Naive thymus-derived CD4-positive, alpha-beta T cell (primary cell): ENCODE measurements at regions of chr6 and their contacts with region 1.

Region 1: DNA sequence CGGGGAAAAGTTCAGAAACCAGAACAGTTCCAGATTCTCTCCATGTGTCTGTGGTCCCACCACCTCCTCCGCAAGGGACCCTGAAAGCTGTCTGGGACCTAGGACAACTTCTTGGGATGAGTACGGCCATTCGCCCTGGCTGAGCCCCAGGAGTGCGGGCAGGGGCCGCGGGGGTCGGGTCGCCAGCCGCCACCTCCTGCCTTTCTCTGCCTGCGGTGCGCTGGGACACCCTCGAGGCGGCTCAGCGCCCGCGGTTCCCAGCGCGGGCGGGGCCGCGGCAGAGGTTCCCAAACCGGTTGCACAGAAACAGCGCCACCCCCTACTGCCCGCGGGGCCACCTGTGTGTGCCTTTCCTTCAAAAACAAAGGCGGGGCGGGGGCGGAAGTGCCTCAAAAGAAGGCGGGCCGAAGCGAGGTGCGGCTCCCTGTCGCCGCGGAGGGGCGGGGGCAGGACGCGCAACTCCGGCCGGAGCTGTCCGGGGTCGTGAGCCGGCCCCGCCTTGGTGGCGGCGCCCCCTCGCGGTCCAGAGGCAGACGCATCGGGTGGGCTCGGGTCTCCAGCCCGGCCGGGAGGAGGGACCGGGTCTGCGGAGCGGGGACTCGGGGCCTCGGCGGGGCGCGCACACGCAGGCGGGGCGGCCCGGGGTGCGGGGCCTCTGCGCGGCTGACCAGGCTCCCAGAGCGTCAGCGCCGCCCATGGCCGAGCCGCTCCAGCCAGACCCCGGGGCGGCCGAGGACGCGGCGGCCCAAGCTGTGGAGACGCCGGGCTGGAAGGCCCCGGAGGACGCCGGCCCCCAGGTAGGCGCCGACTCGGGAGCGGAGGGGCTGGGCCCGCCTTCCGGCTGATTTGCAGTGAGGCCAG is at the start of gene HEBP2:
- DNase-seq: peak; percentile 77 to 95 (median 90)
- ATAC-seq: peak; percentile 94
- H3K4me3 ChIP-seq: peak within 1 kb of the TSS; percentile 98
- H3K4me3 Mint-ChIP-seq: peak within 1 kb of the TSS; percentile 78 to 93 (median 86)
- H3K27ac ChIP-seq: peak within 1 kb of the TSS; percentile 76
- H3K27ac Mint-ChIP-seq: peak within 1 kb of the TSS; percentile 70 to 95 (median 89)
- H3K4me1 ChIP-seq: peaks cover 12 to 14% of the 10 kb centered on the region in 2 donors
- H3K4me1 Mint-ChIP-seq: peaks cover 6 to 43% (median 32%) of the 10 kb centered on the region in 7 donors
- H3K27me3 ChIP-seq: no peaks in the 10 kb centered on the region
- H3K27me3 Mint-ChIP-seq: peaks cover 0 to 22% (median 0%) of the 10 kb centered on the region in 5 donors
- total RNA-seq, gene HEBP2: 24.9 to 50.7 (median 48.2) TPM

Region 2: GRCh38 chr6:136822376-136823127 is 1581.5 kb before region 1 on chr6 and contains the start of gene PEX7:
- CTCF ChIA-PET with region 1: no interaction called
- POLR2A ChIA-PET with region 1: no interaction called
- intact Hi-C with region 1: loop called in 1 of 2 experiments (anchors 5 kb)
- DNase-seq: peak; percentile 83 to 94 (median 92)
- ATAC-seq: peak; percentile 95
- H3K4me3 ChIP-seq: peak within 1 kb of the TSS; percentile 96
- H3K4me3 Mint-ChIP-seq: peak within 1 kb of the TSS; percentile 87 to 99 (median 94)
- H3K27ac ChIP-seq: peak within 1 kb of the TSS; percentile 91
- H3K27ac Mint-ChIP-seq: peak within 1 kb of the TSS; percentile 91 to 99 (median 96)
- H3K4me1 ChIP-seq: peaks cover 6 to 13% of the 10 kb centered on the region in 2 donors
- H3K4me1 Mint-ChIP-seq: peaks cover 13 to 50% (median 40%) of the 10 kb centered on the region in 7 donors
- H3K27me3 ChIP-seq: peaks cover 0 to 3% of the 10 kb centered on the region in 2 donors
- H3K27me3 Mint-ChIP-seq: peaks cover 3 to 10% (median 8%) of the 10 kb centered on the region in 5 donors
- total RNA-seq, gene PEX7: 4.0 to 6.2 (median 5.4) TPM

Region 3: GRCh38 chr6:137811121-137811915 is 592.7 kb before region 1 on chr6:
- CTCF ChIA-PET with region 1: no interaction called
- POLR2A ChIA-PET with region 1: no interaction called
- intact Hi-C with region 1: loop called in 1 of 2 experiments (anchors 10 kb)
- DNase-seq: peak; percentile 42 to 85 (median 53)
- ATAC-seq: peak; percentile 94
- H3K4me3 ChIP-seq: peak overlapping the region; percentile 14
- H3K4me3 Mint-ChIP-seq: peak overlapping the region; percentile 71 to 84 (median 78)
- H3K27ac ChIP-seq: peak overlapping the region; percentile 60
- H3K27ac Mint-ChIP-seq: peak overlapping the region; percentile 89 to 96 (median 93)
- H3K4me1 ChIP-seq: peaks cover 17 to 23% of the 10 kb centered on the region in 2 donors
- H3K4me1 Mint-ChIP-seq: peaks cover 22 to 56% (median 46%) of the 10 kb centered on the region in 7 donors
- H3K27me3 ChIP-seq: no peaks in the 10 kb centered on the region
- H3K27me3 Mint-ChIP-seq: no peaks in the 10 kb centered on the region

Region 4: DNA sequence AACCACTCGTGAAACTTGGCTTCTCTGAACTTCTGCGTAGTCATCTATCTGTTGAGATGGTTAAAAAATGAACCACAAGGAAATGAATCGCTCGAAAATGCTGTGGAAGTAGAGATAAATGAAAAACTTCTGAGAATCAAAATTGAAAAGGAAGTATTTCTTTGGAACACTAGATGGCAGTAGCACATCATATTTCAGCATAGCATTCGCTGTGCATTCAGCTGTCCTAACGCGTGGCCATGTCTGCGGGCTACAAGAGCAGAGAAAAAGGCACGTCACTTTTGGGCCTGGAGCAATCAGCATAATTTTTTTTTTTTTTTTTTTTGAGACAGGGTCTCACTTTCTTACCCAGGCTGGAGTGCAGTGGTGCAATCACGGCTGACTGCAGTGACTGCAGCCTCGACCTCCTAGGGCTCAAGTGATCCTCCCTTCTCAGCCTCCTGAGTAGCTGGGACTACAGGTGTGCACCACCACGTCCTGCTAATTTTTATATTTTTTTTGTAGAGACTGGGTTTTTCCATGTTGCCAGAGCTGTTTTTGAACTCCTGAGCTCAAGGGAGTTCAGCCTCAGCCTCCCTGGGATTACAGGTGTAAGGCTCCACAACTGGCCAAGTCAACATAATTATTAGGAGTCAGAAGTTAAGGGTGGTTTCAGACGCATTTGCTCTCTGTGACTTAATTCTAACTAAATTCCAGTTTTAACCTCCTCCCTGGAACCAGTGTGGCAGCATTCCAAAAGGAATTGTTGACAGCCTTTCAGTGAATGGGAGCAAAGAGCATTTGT is 288.0 kb before region 1 on chr6:
- CTCF ChIA-PET with region 1: interaction called, 7 read pairs
- POLR2A ChIA-PET with region 1: no interaction called
- intact Hi-C with region 1: loop called in 1 of 2 experiments (anchors 1 kb)
- DNase-seq: peak in 7 of 9 donors; percentile 39 to 68 (median 57)
- ATAC-seq: peak; percentile 94
- H3K4me3 ChIP-seq: no peak overlapping the region
- H3K4me3 Mint-ChIP-seq: no peak overlapping the region
- H3K27ac ChIP-seq: no peak overlapping the region
- H3K27ac Mint-ChIP-seq: no peak overlapping the region
- H3K4me1 ChIP-seq: peaks cover 0 to 4% of the 10 kb centered on the region in 2 donors
- H3K4me1 Mint-ChIP-seq: peaks cover 5 to 10% (median 7%) of the 10 kb centered on the region in 7 donors
- H3K27me3 ChIP-seq: no peaks in the 10 kb centered on the region
- H3K27me3 Mint-ChIP-seq: peaks cover 21 to 49% (median 30%) of the 10 kb centered on the region in 5 donors

Region 5: DNA sequence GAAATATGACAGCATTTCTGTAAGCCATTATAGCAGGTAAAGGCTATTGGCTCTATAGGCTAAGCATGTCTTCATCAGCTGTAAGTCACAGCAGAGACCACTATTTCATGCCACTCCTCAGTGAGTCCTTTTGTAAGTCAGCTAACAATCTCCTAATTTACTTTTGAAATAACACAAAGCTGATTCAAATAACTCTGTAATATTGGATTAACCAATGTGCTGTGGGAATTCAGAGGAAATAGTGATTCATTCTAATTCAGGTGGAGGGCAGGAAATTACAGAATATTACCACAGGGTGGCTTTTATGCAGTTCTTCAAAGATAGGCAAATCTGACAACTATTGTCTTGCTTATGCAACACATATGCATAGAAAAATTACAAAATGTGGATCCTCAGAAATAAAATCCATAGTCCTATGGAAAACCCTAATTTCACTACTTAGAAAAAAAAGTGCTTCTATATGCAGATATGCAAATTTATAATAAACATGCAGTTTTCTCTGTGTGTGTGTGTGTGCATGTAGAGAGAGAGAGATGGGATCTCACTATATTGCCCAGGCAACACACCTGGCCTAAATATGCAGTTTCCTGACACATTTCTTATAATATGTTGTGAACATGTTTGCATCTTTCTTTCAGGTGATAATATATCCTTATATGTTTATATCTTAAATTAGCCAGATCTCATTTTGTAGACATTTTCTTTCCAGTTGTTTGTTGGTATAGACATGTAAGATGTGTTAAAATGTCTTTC is 31.1 kb before region 1 on chr6:
- CTCF ChIA-PET with region 1: interaction called, 3 read pairs
- POLR2A ChIA-PET with region 1: interaction called, 4 read pairs
- intact Hi-C with region 1: loop called in 1 of 2 experiments (anchors 1 kb)
- DNase-seq: peak in 5 of 9 donors; percentile 7 to 26 (median 18)
- ATAC-seq: peak; percentile 55
- H3K4me3 ChIP-seq: no peak overlapping the region
- H3K4me3 Mint-ChIP-seq: no peak overlapping the region
- H3K27ac ChIP-seq: no peak overlapping the region
- H3K27ac Mint-ChIP-seq: no peak overlapping the region
- H3K4me1 ChIP-seq: no peaks in the 10 kb centered on the region
- H3K4me1 Mint-ChIP-seq: no peaks in the 10 kb centered on the region
- H3K27me3 ChIP-seq: no peaks in the 10 kb centered on the region
- H3K27me3 Mint-ChIP-seq: peaks cover 0 to 29% (median 5%) of the 10 kb centered on the region in 5 donors

Region 6: DNA sequence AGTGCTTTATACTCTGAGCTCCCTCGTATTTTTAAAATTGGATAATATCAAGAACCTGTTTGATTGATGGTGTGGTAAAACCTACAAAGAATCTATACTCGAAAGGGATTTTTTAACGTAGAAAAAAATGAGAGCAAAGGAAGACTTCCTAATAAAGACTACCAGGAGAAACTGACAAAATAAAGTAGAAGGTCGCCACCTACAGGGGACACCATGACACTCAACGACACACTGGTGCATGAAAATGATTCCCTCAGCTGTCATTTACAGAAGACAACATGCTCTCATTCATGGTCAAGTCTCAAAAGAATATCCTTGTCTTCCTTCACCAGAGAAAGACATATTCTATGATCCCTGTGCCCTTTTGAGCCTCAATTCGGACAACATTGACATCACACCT is 105.3 kb after region 1 on chr6:
- CTCF ChIA-PET with region 1: interaction called, 3 read pairs
- POLR2A ChIA-PET with region 1: interaction called, 3 read pairs
- intact Hi-C with region 1: loop called in 1 of 2 experiments (anchors 1 kb)
- DNase-seq: peak in 8 of 9 donors; percentile 5 to 52 (median 31)
- ATAC-seq: peak; percentile 52
- H3K4me3 ChIP-seq: no peak overlapping the region
- H3K4me3 Mint-ChIP-seq: no peak overlapping the region
- H3K27ac ChIP-seq: no peak overlapping the region
- H3K27ac Mint-ChIP-seq: peak overlapping the region in 1 of 9 donors; percentile 6
- H3K4me1 ChIP-seq: peaks cover 0 to under 1% of the 10 kb centered on the region in 2 donors
- H3K4me1 Mint-ChIP-seq: peaks cover 0 to 5% (median 0%) of the 10 kb centered on the region in 7 donors
- H3K27me3 ChIP-seq: no peaks in the 10 kb centered on the region
- H3K27me3 Mint-ChIP-seq: peaks cover 0 to 23% (median 4%) of the 10 kb centered on the region in 5 donors

Region 7: DNA sequence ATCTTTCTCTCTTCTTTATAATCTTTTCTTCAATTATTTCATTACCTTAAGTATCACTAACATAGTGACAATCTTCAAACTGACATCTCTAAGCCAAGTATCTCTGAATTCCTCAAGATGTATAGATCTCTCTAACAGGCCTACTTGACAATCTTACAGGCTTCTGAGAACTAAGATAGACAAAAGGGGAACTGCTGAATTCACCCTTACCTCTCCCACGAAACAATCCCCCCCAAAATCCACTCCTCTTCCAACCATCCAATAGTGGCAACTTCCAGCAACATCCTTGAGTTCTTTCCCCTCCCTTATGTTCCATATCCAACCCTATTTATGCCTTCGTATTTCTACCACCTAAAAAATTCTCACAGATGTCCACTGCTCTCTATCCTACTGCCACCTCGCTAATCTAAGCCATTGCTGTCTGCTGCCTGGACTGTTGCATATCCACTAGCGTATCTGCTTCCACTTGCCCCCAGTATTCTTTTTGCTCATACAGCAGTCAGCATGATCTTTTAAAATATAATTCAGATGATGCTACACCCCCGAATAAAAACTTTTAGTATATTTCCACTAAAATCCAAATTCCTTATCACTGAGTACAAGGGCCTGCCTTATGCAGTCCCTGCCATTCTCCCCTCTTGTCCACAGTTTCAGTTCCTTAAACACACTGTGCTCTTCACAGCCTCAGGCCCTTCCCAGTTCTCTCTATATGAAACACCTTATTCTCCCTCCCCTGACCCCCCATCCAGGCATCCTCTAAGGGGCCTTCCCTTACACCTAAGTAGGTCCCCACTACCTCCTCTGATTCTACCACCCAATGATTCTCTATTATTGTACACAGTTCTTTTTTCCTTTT is 576.0 kb after region 1 on chr6:
- CTCF ChIA-PET with region 1: no interaction called
- POLR2A ChIA-PET with region 1: no interaction called
- intact Hi-C with region 1: loop called in 1 of 2 experiments (anchors 5 kb)
- DNase-seq: no peak
- ATAC-seq: peak; percentile 53
- H3K4me3 ChIP-seq: no peak overlapping the region
- H3K4me3 Mint-ChIP-seq: peak overlapping the region in 4 of 10 donors; percentile 8 to 27 (median 16)
- H3K27ac ChIP-seq: no peak overlapping the region
- H3K27ac Mint-ChIP-seq: peak overlapping the region in 5 of 9 donors; percentile 2 to 48 (median 26)
- H3K4me1 ChIP-seq: peaks cover 16 to 34% of the 10 kb centered on the region in 2 donors
- H3K4me1 Mint-ChIP-seq: peaks cover 14 to 65% (median 50%) of the 10 kb centered on the region in 7 donors
- H3K27me3 ChIP-seq: no peaks in the 10 kb centered on the region
- H3K27me3 Mint-ChIP-seq: no peaks in the 10 kb centered on the region